ENCODE measurements at regions of chr9 and their contacts with region 1.

Region 1: DNA sequence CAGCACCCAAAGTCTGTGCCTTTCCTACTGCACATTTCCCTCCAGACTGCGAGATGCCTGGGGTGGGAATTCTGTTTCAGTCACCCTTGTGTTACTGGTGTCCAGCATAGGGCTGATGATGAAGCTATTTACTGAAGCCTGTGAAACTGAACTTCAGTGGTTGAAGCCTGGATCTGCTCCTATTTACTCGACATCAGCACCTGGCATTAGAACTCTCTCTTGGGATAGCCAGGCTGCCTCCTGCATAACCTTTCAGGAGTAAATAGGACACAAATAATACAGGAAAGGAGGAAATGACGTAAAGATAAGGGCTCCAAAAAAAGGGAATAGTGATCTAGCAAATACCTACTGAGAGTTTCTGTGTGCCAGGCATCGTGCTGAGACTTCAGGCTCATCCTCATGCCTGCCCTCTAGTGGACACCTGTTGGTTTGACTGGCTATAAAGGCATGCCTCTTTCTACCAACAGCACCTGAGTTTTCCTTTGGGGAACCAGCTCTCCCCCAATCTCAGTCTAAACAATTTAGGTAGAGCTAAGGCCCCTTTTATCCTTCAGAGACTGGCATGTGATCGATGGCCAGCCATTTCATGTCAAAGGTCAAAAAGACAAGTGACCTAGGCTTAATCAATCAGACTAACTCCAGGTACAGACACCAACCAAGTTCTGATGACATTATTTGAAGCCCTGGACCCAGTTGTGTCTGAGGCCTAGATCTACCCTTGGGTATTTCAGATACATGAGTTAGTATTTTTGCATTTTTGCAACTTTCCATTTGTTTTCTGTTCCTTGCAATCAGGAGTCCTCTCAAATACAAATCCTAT is 192.1 kb upstream of the TRIM32 start:
- DNase-seq: no peak
- H3K4me3 ChIP-seq: no peak overlapping the region
- H3K27ac ChIP-seq: no peak overlapping the region
- H3K4me1 ChIP-seq: no peaks in the 10 kb centered on the region
- H3K27me3 ChIP-seq: no peaks in the 10 kb centered on the region
- CTCF ChIP-seq: peak; percentile 83 to 86

Region 2: DNA sequence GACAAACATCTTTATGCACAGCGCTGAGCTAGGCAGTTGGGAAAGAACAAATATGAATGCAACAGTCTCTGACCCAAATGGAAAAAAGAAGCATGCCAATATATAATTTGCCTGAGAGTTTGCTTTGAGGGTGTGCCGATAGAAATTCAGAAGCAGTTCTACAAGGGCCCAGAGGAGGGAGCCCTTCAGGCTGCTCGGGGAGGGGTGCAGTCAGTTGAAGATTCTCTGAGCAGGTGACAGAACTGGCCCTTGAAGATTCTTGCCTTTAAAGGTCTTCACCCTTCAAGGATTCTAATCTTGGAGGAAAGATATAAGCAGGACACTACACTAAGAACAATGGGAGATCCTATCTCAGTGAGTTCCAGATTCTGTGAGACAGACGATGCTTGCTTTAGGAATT is 345.2 kb before region 1 on chr9:
- CTCF ChIA-PET with region 1: no interaction called
- dilution Hi-C with region 1: no loop called
- in situ Hi-C with region 1: loop called (anchors 25 kb)
- intact Hi-C with region 1: loop called (anchors 2 kb)
- DNase-seq: no peak
- H3K4me3 ChIP-seq: no peak overlapping the region
- H3K27ac ChIP-seq: no peak overlapping the region
- H3K4me1 ChIP-seq: peaks cover 18% of the 10 kb centered on the region
- H3K27me3 ChIP-seq: peaks cover 6% of the 10 kb centered on the region
- CTCF ChIP-seq: peak; percentile 69 to 79